ENCODE measurements at regions of chr18 and their contacts with region 1.

Region 1: GRCh38 chr18:12391618-12392165 is 14.7 kb upstream of the AFG3L2 start:
- DNase-seq: peak; percentile 43 to 88
- H3K4me3 ChIP-seq: no peak overlapping the region
- CTCF ChIP-seq: peak in 1 of 3 donors; percentile 87
- POLR2A ChIP-seq: no peak

Region 2: GRCh38 chr18:12657684-12658425 is 266.2 kb after region 1 on chr18 and contains the start of gene SPIRE1:
- intact Hi-C with region 1: loop called (anchors 5 kb)
- DNase-seq: peak in 1 of 2 donors; percentile 91
- H3K4me3 ChIP-seq: peak within 1 kb of the TSS; percentile 72
- CTCF ChIP-seq: no peak
- POLR2A ChIP-seq: no peak
- total RNA-seq, gene SPIRE1: 22.5 to 56.5 (median 38.3) TPM